ENCODE measurements at regions of chr3 and their contacts with region 1.

Region 1: GRCh38 chr3:48320996-48321395 is 12.5 kb downstream of the SPINK8 start:
- DNase-seq: no peak
- H3K4me3 ChIP-seq: no peak overlapping the region
- CTCF ChIP-seq: no peak

Region 2: DNA sequence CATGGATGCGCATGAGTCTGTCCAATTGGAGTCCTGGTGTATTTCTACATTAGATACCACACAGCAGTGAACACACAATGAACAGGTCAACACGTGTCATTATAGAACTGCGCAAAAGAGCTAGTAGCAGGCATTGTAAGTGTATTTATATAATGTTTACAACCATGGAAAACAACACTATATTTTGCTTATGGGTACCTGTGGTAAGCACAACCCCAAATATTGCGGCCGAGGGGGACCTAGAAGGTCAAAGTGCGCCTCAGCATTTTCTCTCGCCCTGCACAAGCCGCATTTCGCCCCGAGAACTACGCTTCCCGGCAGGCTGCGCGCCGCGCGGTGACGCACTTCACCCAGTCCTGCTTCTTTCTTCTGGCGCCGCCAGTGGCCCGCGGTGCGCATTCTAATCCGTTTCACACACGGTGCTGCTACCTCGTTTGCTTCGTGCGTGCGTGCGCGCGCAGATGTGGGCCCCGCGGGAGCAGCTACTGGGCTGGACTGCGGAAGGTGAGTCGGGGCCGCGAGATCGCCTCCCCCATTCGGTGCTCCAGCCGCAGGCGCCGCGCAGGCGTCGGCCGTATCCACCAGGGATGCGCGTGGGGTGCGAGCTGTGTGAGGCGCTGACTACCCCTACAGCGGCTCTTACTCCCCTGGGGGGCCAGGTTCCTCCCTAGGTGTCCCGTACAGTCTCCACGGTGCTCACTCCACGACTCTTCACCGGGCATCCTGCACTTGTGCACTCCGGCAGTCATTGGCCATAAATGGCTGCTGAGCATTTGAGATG is 80.1 kb before region 1 on chr3 and contains the start of gene ZNF589:
- in situ Hi-C with region 1: no loop called
- DNase-seq: peak; percentile 84
- H3K4me3 ChIP-seq: peak within 1 kb of the TSS; percentile 84
- CTCF ChIP-seq: peak; percentile 26

Region 3: DNA sequence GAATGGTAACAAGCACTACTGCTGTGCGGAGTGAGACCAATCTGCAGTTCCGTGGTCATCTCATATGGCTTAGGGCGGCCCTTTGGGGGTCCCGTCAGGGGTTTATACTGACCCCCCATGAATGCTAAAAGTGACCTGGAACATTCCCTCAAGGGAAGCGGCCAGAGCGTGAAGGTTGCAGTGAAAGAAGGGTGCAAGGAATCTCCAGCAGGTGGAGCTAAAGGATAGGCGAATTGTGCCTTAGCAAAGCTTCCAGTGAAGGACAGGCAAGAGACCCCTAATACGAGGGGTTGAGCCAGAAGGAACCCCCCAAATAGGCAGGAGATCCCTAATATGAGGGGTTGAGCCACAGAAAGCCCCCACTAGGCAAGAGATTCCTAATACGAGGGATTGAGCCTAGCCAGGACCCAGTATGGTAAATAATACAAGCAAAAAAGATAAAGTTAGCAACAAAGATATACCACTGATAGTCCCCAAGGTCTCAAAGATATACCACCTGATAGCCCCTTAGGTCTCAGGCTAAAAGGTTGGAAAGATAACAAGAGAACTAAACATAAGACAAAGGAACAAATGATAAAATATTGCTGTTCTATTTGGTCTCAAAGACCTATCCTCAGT is 47.3 kb before region 1 on chr3:
- in situ Hi-C with region 1: loop called (anchors 10 kb)
- DNase-seq: peak; percentile 32
- H3K4me3 ChIP-seq: no peak overlapping the region
- CTCF ChIP-seq: peak; percentile 84

Region 4: DNA sequence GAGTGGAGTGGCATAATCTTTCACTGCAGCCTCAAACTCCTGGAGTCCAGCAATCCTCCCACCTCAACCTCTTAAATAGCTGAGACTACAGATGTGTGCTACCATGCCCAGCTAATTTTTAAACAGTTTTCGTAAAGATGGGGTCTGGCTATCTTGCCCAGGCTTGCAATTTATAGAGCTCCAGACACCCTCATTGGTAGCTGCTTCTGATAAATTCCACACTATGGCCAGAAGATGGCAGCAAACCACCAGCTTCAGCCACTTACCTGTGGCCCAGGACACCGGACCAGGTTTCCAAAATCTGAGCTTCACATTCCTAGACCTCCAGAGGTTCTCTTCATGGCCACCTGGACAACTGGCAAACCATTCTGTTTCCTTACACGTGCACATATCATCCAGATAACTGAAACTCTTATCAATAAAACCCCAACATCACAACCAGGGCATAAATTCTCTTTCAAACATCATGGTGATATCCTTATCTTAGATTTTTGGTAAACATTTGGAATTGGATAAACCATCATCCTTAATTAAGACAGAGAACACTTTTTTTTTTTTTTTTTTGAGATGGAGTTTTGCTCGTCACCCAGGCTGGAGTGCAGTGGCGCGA is 79.9 kb after region 1 on chr3:
- in situ Hi-C with region 1: no loop called
- DNase-seq: peak; percentile 35
- H3K4me3 ChIP-seq: no peak overlapping the region
- CTCF ChIP-seq: peak; percentile 69

Region 5: DNA sequence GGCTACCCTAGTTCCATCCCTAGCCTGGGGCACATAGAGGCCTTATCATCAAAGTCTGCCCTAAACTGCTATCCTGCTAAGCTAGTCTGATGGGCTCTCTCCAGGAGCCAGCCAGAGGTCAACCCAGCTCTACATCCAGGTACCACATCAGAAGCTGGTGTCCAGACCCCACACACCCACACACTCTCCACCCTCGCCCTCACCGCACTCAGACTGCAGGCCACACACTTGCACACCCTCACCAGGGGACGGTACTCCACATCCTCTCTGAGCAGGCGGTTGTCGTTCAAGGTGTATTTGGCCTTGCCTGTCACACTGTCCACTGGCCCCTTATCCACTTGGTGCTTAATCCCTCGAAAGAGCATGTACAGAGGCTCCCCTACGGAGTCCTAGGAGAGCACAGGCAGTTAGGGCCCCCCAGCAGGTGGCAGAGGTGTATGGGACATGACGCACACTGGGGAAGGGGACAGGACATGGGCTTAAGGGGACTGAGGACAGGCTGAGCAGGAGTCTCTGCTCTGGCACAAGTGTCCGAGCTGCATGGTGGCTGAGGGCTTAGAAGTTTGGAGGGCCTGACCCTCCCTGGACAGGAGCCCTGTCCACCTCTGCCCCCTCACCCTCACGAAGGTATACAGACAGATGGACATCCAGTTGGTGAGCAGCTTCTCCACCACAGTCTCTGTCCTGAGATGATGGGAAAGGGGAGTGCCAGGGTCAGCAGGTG is 90.8 kb after region 1 on chr3:
- in situ Hi-C with region 1: no loop called
- DNase-seq: no peak
- H3K4me3 ChIP-seq: no peak overlapping the region
- CTCF ChIP-seq: no peak

Measured in astrocyte of the cerebellum (primary cell).